Posterior vena cava (tissue), 2 donors: ENCODE measurements at regions of chr10 and their contacts with region 1.

Region 1: DNA sequence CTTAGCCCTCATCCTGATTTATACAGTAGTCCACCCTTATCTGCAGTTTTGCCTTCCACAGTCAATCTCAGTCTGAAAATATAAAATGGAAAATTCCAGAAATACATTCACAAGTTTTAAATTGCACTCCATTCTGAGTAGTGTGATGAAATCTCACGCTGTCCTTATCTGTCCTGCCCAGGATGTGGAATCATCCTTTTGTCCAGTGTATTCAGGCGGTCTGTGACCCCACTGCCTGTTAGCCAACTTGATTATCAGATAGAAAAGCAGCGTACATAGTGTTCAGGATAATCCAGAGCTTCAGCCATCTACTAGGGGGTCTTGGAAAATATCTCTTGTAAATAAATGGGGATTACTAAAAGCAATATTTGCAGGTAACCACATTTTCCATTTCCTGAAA is 146.3 kb downstream of the MALRD1 start:
- DNase-seq: no peak

Region 2: GRCh38 chr10:18561861-18562551 is 632.9 kb before region 1 on chr10:
- intact Hi-C with region 1: loop called in 1 of 2 experiments (anchors 10 kb)
- DNase-seq: no peak

Region 3: DNA sequence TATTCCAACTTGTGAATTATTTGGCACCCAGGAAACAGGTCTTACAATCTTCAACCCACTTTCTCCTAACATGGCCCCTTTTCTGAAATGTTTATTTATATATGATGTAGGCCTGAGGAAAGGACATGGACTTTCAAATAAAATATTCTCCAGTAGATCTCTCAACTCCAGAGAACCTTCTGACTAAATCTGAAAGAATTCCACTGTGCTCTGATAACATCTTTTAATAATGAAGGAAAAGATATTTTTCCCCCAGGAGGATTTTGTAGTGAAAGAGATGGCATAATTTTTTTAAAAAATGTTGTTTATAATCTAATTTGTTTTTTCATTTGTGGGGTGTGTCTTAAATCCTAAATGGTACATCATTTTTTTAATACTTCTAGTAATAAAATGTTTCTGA is 26.0 kb after region 1 on chr10:
- intact Hi-C with region 1: no loop called
- DNase-seq: no peak